A549 (cell line): ENCODE measurements at regions of chr5 and their contacts with region 1.

Region 1: GRCh38 chr5:154520861-154521453 is 42.9 kb upstream of the HAND1 start:
- DNase-seq: peak; percentile 43 to 79
- ATAC-seq: peak; percentile 23 to 68; a peak in 3 of 6 replicates
- H3K4me3 ChIP-seq: no peak overlapping the region
- H3K27ac ChIP-seq: no peak overlapping the region
- H3K4me1 ChIP-seq: peaks cover 39% of the 10 kb centered on the region
- CTCF ChIP-seq: peak; percentile 80
- EP300 ChIP-seq: no peak
- POLR2A ChIP-seq: no peak
- RAD21 ChIP-seq: peak; percentile 58 to 63; a peak in 4 of 5 replicates

Region 2: GRCh38 chr5:154196955-154197652 is 323.9 kb before region 1 on chr5:
- CTCF ChIA-PET with region 1: no interaction called
- POLR2A ChIA-PET with region 1: no interaction called
- DNase-seq: peak; percentile 35 to 51
- ATAC-seq: peak; percentile 37 to 38; a peak in 3 of 6 replicates
- H3K4me3 ChIP-seq: no peak overlapping the region
- H3K27ac ChIP-seq: peak overlapping the region; percentile 90 to 93
- H3K4me1 ChIP-seq: peaks cover 89% of the 10 kb centered on the region
- CTCF ChIP-seq: peak; percentile 48
- EP300 ChIP-seq: no peak
- POLR2A ChIP-seq: no peak
- RAD21 ChIP-seq: peak; percentile 16 to 42; a peak in 3 of 5 replicates

Region 3: GRCh38 chr5:154373729-154374179 is 147.2 kb before region 1 on chr5:
- CTCF ChIA-PET with region 1: no interaction called
- POLR2A ChIA-PET with region 1: no interaction called
- DNase-seq: no peak
- ATAC-seq: no peak
- H3K4me3 ChIP-seq: no peak overlapping the region
- H3K27ac ChIP-seq: peak overlapping the region; percentile 25 to 28; a peak in 2 of 6 replicates
- H3K4me1 ChIP-seq: peaks cover 37% of the 10 kb centered on the region
- CTCF ChIP-seq: no peak
- EP300 ChIP-seq: no peak
- POLR2A ChIP-seq: no peak
- RAD21 ChIP-seq: no peak

Region 4: DNA sequence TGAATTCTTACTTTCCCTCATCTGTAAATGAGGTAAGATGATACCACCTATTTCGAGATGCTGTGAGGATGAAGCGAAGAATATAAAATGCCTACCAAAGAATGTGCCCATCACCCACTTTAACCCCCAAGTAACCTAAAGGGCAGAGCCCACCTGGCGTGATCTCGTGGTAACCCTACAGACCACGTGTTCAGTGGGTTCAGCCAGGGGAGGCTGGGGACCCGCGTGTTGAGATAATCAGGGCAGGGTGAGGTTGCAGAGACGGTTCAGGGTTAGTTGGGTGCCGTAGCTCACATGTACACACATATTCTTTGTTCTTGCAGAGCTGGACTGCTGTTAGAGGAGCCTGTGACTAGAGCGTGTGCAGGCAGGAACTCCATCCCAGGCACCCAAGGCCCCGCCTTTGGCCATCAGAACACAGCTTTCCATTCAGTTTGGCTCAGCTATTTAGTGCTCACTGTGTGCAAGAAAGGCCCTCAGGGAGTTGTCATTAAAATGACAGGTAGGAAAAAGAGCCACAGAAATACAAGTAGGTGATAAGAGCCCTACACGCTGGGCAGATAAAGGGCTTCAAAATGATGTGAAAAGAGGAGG is 13.6 kb after region 1 on chr5:
- CTCF ChIA-PET with region 1: interaction called, 12 read pairs
- POLR2A ChIA-PET with region 1: no interaction called
- DNase-seq: no peak
- ATAC-seq: no peak
- H3K4me3 ChIP-seq: no peak overlapping the region
- H3K27ac ChIP-seq: no peak overlapping the region
- H3K4me1 ChIP-seq: no peaks in the 10 kb centered on the region
- CTCF ChIP-seq: no peak
- EP300 ChIP-seq: no peak
- POLR2A ChIP-seq: no peak
- RAD21 ChIP-seq: no peak

Region 5: GRCh38 chr5:154547551-154547950 is 26.6 kb after region 1 on chr5:
- CTCF ChIA-PET with region 1: interaction called, 15 read pairs
- POLR2A ChIA-PET with region 1: no interaction called
- DNase-seq: no peak
- ATAC-seq: no peak
- H3K4me3 ChIP-seq: no peak overlapping the region
- H3K27ac ChIP-seq: no peak overlapping the region
- H3K4me1 ChIP-seq: no peaks in the 10 kb centered on the region
- CTCF ChIP-seq: no peak
- EP300 ChIP-seq: no peak
- POLR2A ChIP-seq: no peak
- RAD21 ChIP-seq: no peak

Region 6: GRCh38 chr5:154575546-154576428 is 54.8 kb after region 1 on chr5:
- CTCF ChIA-PET with region 1: interaction called, 40 read pairs
- POLR2A ChIA-PET with region 1: no interaction called
- DNase-seq: peak in 1 of 2 experiments; percentile 38
- ATAC-seq: peak; percentile 72 to 74; a peak in 5 of 6 replicates
- H3K4me3 ChIP-seq: no peak overlapping the region
- H3K27ac ChIP-seq: no peak overlapping the region
- H3K4me1 ChIP-seq: 0 out of 3 replicates have a peak, but pooled peaks cover 3% of the 10 kb centered on the region
- CTCF ChIP-seq: peak; percentile 49
- EP300 ChIP-seq: no peak
- POLR2A ChIP-seq: no peak
- RAD21 ChIP-seq: peak; percentile 39 to 44

Region 7: DNA sequence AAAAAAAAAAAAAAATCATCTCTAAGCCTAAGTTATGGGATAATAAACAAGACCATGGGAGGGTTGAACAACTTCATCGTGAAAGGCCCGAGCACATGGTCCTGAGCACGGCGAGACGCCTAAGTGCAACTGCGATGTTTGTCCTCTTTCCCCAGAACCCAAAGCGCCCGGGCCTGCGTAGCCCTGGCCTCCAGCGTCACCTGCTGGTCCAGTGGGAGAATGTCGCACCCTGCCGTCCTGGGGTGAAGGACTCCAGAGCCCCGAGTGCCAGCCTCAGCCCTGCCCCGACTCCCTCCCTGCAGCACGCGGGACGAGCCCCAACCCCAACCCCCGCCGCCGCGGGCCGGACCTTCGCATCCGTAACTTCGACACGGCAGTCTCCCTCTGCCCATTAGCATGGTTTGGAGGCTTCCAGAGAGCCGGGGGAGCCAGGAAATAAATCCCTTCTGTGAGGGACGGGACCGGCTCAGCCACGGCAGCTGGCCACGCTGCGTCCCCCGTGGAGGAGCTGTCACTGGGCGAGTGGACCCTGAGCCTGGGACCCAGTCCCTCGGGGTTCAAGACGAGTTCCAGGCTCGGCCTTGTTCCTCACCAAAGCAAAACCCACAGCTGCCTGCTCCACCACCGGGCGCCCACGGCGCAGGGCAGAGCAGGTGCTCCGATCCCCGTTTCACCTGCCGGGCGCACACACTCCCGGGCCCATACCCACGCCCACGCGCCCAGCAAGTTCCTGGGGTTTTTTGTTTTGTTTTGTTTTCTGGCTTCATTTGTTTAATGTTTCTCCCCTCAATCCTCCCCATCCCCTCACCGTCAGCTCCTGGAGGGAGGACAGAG is 89.6 kb after region 1 on chr5:
- CTCF ChIA-PET with region 1: interaction called, 37 read pairs
- POLR2A ChIA-PET with region 1: no interaction called
- DNase-seq: peak; percentile 84 to 88
- ATAC-seq: peak; percentile 93 to 98
- H3K4me3 ChIP-seq: peak overlapping the region; percentile 33
- H3K27ac ChIP-seq: peak overlapping the region in 1 of 2 experiments; percentile 69; a peak in 3 of 6 replicates
- H3K4me1 ChIP-seq: peaks cover 4% of the 10 kb centered on the region; the same call in 1 of the 3 replicates
- CTCF ChIP-seq: peak; percentile 94
- EP300 ChIP-seq: no peak
- POLR2A ChIP-seq: no peak
- RAD21 ChIP-seq: peak; percentile 99